ENCODE measurements at regions of chr11 and their contacts with region 1.

Region 1: GRCh38 chr11:102666331-102666957 is 39.1 kb downstream of the MMP27 start:
- DNase-seq: peak; percentile 13
- H3K4me3 ChIP-seq: no peak overlapping the region
- H3K27ac ChIP-seq: no peak overlapping the region
- H3K27me3 ChIP-seq: no peaks in the 10 kb centered on the region
- CTCF ChIP-seq: peak; percentile 96

Region 2: GRCh38 chr11:102293873-102294601 is 372.4 kb before region 1 on chr11:
- CTCF ChIA-PET with region 1: interaction called, 16 read pairs
- POLR2A ChIA-PET with region 1: no interaction called
- DNase-seq: no peak
- H3K4me3 ChIP-seq: no peak overlapping the region
- H3K27ac ChIP-seq: no peak overlapping the region
- H3K27me3 ChIP-seq: no peaks in the 10 kb centered on the region
- CTCF ChIP-seq: peak; percentile 74

Region 3: GRCh38 chr11:102367364-102367763 is 299.1 kb before region 1 on chr11:
- CTCF ChIA-PET with region 1: interaction called, 13 read pairs
- POLR2A ChIA-PET with region 1: no interaction called
- DNase-seq: no peak
- H3K4me3 ChIP-seq: no peak overlapping the region
- H3K27ac ChIP-seq: no peak overlapping the region
- H3K27me3 ChIP-seq: no peaks in the 10 kb centered on the region
- CTCF ChIP-seq: 0 out of 2 replicates have a peak, but pooled peaks have one; percentile 17

Region 4: DNA sequence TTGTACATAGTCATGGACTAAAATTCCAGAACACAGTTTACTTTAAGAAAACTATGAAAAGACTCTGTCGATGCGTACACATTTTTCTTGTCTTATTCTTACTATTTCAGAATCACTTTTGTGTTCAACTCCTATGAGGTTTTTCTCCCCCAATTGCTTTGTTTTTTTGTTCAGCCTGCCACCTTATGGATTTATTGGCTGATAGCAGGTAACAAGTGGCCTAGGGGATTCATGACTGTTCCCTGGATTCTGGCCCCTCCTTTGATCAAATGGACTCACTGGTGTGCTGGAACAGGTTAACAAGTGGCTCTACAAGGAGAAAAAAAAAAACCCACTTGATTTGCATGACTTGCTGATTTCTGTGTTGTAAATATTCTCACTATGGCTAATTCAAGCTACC is 52.0 kb before region 1 on chr11:
- CTCF ChIA-PET with region 1: interaction called, 12 read pairs
- POLR2A ChIA-PET with region 1: no interaction called
- DNase-seq: no peak
- H3K4me3 ChIP-seq: no peak overlapping the region
- H3K27ac ChIP-seq: no peak overlapping the region
- H3K27me3 ChIP-seq: no peaks in the 10 kb centered on the region
- CTCF ChIP-seq: peak; percentile 7; the same call in 1 of the 2 replicates

Region 5: DNA sequence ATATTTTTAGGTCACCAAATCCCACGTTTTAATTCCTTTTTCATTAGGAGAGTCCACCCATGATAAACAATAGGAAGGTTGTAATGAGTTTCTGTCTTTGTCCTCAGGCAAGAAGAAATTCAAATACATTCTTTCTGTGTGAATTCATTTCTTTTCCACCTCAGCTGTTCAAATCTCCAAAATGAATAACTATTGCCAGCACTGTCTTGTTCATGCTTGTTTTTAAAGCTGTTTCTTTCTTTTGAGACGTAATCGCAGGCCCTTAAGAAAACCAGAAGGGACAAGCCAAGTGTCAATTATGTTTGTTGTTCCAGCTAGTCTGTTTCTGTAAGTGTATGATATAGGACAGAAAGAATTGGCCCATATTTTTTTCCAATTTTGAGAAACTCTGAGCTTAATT is 18.9 kb after region 1 on chr11:
- CTCF ChIA-PET with region 1: interaction called, 12 read pairs
- POLR2A ChIA-PET with region 1: no interaction called
- DNase-seq: no peak
- H3K4me3 ChIP-seq: no peak overlapping the region
- H3K27ac ChIP-seq: no peak overlapping the region
- H3K27me3 ChIP-seq: no peaks in the 10 kb centered on the region
- CTCF ChIP-seq: no peak